ENCODE measurements at regions of chr15 and their contacts with region 1.

Region 1: GRCh38 chr15:53962332-53963241 is 15.7 kb upstream of the UNC13C start:
- DNase-seq: peak; percentile 33
- ATAC-seq: no peak

Region 2: DNA sequence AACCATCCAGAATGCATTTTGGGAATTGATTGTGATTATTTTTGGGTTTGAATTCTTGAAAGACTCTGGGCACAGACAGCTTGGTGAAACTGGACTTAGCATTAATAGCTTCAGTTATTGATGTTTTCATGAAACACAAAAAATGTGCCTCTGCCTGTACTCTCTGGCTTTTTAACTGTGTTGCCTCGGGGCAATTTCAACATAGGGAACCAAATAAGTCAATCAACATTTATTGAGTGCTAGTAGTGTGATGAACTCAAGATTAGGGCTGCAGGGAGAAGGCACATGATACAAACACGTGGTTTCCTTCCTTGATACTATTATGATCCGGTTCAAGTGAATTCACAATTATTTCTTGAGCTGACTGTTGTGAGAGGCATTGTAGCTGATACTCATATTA is 66.5 kb after region 1 on chr15:
- intact Hi-C with region 1: no loop called
- DNase-seq: no peak
- ATAC-seq: no peak

Region 3: GRCh38 chr15:54045397-54045796 is 82.8 kb after region 1 on chr15:
- intact Hi-C with region 1: no loop called
- DNase-seq: no peak
- ATAC-seq: no peak

Region 4: DNA sequence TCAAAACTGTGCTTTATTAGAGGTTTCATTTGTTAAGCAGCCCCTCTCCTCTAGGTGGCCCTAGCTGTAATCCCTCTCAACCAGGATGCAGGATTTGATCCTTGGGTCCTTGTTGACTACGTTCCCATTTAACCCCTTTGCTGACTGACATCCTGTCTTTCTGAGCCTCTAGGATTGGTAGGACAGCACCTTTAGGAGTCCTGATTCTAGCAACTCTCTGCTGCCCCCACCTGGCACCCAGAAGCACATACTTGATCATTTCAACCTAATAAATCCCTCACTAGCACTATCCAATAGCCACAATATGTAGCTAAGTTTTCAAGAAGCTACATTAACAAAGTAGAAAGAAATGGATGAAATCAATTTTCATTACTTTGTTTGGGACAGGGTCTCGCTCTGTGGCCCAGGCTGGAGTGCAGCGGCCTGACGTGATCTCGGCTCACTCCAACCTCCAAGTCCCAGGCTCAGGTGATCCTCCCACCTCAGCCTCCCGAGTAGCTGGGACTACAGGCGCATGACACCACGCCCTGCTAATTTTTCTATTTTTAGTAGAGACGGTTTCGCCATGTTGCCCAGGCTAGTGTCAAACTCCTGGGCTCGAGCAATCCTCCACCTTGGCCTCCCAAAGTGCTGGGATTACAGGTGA is 1205.9 kb after region 1 on chr15:
- intact Hi-C with region 1: loop called in 1 of 2 experiments (anchors 10 kb)
- DNase-seq: peak; percentile 53
- ATAC-seq: peak in 1 of 2 donors; percentile 53